ENCODE measurements at regions of chr12 and their contacts with region 1.

Region 1: GRCh38 chr12:57904848-57905811 is 36.2 kb upstream of the ATP23 start:
- DNase-seq: peak; percentile 81 to 90 (median 84)
- ATAC-seq: peak; percentile 95
- H3K4me3 ChIP-seq: no peak overlapping the region
- H3K27ac ChIP-seq: no peak overlapping the region
- H3K4me1 ChIP-seq: peaks cover 0 to 8% of the 10 kb centered on the region in 2 experiments; a peak in 3 of 5 replicates
- H3K27me3 ChIP-seq: no peaks in the 10 kb centered on the region
- CTCF ChIP-seq: peak; percentile 100
- EP300 ChIP-seq: 0 out of 2 replicates have a peak, but pooled peaks have one; percentile 31
- POLR2A ChIP-seq: no peak
- RAD21 ChIP-seq: peak; percentile 100

Region 2: GRCh38 chr12:57695770-57696432 is 209.2 kb before region 1 on chr12:
- CTCF ChIA-PET with region 1: no interaction called
- POLR2A ChIA-PET with region 1: no interaction called
- in situ Hi-C with region 1: no loop called
- intact Hi-C with region 1: no loop called
- DNase-seq: no peak
- ATAC-seq: no peak
- H3K4me3 ChIP-seq: no peak overlapping the region
- H3K27ac ChIP-seq: no peak overlapping the region
- H3K4me1 ChIP-seq: peaks cover 4 to 10% of the 10 kb centered on the region in 2 experiments; a peak in 3 of 5 replicates
- H3K27me3 ChIP-seq: no peaks in the 10 kb centered on the region
- CTCF ChIP-seq: no peak
- EP300 ChIP-seq: no peak
- POLR2A ChIP-seq: no peak
- RAD21 ChIP-seq: no peak

Region 3: GRCh38 chr12:57735952-57736740 is 169.0 kb before region 1 on chr12:
- CTCF ChIA-PET with region 1: no interaction called
- POLR2A ChIA-PET with region 1: no interaction called
- in situ Hi-C with region 1: no loop called
- intact Hi-C with region 1: no loop called
- DNase-seq: peak; percentile 77 to 85 (median 82)
- ATAC-seq: peak; percentile 93
- H3K4me3 ChIP-seq: peak overlapping the region; percentile 38
- H3K27ac ChIP-seq: peak overlapping the region; percentile 11; the same call in 2 of the 3 replicates
- H3K4me1 ChIP-seq: peaks cover 9 to 31% of the 10 kb centered on the region in 2 experiments; a peak in 4 of 5 replicates
- H3K27me3 ChIP-seq: peaks cover 20 to 59% of the 10 kb centered on the region in 2 experiments
- CTCF ChIP-seq: peak; percentile 71 to 79 (median 79)
- EP300 ChIP-seq: no peak
- POLR2A ChIP-seq: no peak
- RAD21 ChIP-seq: peak; percentile 66 to 78

Region 4: DNA sequence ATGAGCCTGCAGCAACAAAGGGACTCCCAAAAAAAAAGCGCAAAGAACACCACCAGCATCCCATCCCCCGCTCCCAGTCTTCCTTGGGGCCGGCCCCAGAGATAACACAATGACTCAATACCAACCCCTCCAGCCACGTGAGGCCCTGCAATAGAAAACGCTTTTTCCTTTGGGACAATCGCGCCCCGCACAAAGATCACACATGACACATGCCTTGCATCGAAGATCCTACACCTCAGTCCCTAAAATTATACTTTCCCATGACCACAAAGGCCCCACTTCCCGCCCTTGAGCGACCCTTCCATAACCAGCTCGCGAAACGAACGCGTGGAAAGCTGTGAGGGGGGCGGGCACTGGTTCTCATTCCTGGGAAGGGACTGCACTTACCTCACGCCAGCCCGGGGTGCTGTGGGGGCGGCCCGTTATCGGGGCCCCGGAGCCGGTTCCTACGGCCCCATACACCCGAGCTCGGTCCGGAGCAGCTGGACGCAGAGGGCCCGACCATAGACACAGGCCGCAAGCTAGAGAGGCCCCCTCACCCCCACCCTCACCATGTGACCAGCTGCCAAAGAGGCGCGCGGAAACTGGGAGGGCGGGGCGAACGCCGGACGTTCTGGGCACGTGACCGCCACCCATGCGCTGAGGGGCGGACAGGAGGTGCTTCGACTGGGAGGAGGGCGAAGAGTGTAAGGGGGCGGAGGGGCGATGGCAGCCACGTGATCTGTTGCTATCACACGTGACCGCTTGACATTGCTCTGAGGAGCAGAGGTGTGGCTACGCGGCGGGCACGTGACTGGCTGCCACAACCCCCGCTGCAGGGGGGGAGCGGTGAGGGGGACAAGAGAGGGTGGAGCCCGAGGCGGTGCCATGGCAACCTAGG is 153.1 kb before region 1 on chr12 and contains the start of gene CDK4:
- CTCF ChIA-PET with region 1: interaction called, 10 read pairs
- POLR2A ChIA-PET with region 1: no interaction called
- in situ Hi-C with region 1: no loop called
- intact Hi-C with region 1: loop called (anchors 1 kb)
- DNase-seq: peak; percentile 92 to 99 (median 96)
- ATAC-seq: peak; percentile 86
- H3K4me3 ChIP-seq: peak within 1 kb of the TSS; percentile 66
- H3K27ac ChIP-seq: peak within 1 kb of the TSS; percentile 96
- H3K4me1 ChIP-seq: peaks cover 34 to 40% of the 10 kb centered on the region in 2 experiments
- H3K27me3 ChIP-seq: no peaks in the 10 kb centered on the region
- CTCF ChIP-seq: no peak; a peak in 1 of 6 replicates
- EP300 ChIP-seq: peak; percentile 75
- POLR2A ChIP-seq: peak; percentile 90
- RAD21 ChIP-seq: 0 out of 4 replicates have a peak, but pooled peaks of 1 of the 2 experiments have one; percentile 1
- polyA plus RNA-seq, gene CDK4: 37.8 to 62.8 TPM

Region 5: DNA sequence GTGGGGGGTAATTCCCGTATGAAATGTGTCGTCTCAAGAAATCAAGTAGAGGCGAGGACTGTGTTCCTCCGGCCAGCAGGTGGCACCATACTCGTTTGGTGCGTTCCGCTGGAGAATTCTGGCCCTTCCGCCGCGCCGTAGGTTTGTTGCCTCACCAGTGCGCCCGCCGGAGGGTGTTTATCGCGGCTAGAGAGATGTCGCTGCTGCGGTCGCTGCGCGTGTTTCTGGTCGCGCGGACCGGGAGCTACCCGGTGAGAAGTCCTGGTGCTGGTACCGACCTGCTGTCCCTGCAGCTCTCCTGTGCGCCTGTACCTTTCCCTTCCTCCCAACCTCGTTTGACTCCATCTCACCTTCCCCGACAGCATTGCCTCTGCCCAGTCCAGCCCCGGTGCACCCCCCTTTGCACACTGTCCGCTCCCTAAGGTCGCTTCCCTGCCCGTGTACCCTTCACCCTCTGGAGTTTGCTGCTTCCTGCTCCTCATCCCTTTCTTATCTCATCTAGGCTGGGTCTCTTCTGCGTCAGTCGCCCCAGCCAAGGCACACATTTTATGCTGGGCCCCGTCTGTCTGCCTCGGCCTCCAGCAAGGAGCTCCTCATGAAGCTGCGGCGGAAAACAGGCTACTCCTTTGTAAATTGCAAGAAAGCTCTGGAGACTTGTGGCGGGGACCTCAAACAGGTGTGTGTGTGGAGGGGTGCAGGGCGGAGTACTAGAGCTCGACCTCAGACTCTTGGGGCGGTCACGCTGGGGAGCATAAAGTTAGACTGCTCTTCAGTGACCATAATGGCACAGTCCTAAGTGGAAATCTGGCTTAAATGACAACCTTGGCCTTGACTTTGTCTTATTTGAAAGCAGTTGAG is 122.3 kb before region 1 on chr12 and contains the start of gene TSFM:
- CTCF ChIA-PET with region 1: interaction called, 14 read pairs
- POLR2A ChIA-PET with region 1: no interaction called
- in situ Hi-C with region 1: no loop called
- intact Hi-C with region 1: no loop called
- DNase-seq: peak; percentile 76 to 98 (median 82)
- ATAC-seq: peak; percentile 92
- H3K4me3 ChIP-seq: peak within 1 kb of the TSS; percentile 69
- H3K27ac ChIP-seq: peak within 1 kb of the TSS; percentile 75
- H3K4me1 ChIP-seq: peaks cover 8 to 12% of the 10 kb centered on the region in 2 experiments; a peak in 4 of 5 replicates
- H3K27me3 ChIP-seq: no peaks in the 10 kb centered on the region
- CTCF ChIP-seq: peak; percentile 91 to 97 (median 96)
- EP300 ChIP-seq: peak; percentile 60; the same call in 1 of the 2 replicates
- POLR2A ChIP-seq: peak; percentile 97
- RAD21 ChIP-seq: peak; percentile 53 to 57
- polyA plus RNA-seq, gene TSFM: 166 to 198 TPM

Region 6: DNA sequence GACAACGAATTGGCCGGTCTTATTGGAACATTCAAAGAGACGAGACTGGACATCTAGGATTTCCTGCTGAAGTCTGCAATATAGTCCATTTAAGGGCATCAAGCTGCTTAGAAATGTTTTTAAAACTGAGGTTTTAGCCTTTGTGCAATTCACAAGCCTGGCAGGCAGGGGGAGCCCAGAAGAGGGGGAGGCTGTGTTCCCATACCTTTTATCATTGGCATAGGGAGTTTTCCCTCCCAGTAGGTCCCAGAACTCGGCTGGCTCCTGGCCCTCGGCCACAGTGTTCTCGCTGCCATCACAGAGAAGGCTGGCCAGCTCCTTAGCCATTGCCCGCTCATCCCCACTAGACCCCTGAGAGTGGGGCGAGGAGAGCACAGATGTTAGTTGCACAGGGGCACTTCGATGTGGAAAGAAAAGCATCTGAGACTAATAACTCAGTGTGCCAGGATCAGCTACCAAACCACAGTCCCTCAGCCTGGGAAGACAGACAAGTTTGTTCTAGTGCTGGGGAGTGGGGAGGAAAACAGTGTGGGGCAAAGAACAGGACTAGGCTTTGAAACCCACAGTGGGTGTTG is 101.7 kb before region 1 on chr12:
- CTCF ChIA-PET with region 1: interaction called, 23 read pairs
- POLR2A ChIA-PET with region 1: no interaction called
- in situ Hi-C with region 1: no loop called
- intact Hi-C with region 1: loop called (anchors 1 kb)
- DNase-seq: peak; percentile 43 to 63 (median 52)
- ATAC-seq: peak; percentile 82
- H3K4me3 ChIP-seq: no peak overlapping the region
- H3K27ac ChIP-seq: no peak overlapping the region
- H3K4me1 ChIP-seq: no peaks in the 10 kb centered on the region
- H3K27me3 ChIP-seq: no peaks in the 10 kb centered on the region
- CTCF ChIP-seq: peak; percentile 70 to 89 (median 76)
- EP300 ChIP-seq: no peak
- POLR2A ChIP-seq: no peak
- RAD21 ChIP-seq: peak; percentile 46 to 73

Region 7: DNA sequence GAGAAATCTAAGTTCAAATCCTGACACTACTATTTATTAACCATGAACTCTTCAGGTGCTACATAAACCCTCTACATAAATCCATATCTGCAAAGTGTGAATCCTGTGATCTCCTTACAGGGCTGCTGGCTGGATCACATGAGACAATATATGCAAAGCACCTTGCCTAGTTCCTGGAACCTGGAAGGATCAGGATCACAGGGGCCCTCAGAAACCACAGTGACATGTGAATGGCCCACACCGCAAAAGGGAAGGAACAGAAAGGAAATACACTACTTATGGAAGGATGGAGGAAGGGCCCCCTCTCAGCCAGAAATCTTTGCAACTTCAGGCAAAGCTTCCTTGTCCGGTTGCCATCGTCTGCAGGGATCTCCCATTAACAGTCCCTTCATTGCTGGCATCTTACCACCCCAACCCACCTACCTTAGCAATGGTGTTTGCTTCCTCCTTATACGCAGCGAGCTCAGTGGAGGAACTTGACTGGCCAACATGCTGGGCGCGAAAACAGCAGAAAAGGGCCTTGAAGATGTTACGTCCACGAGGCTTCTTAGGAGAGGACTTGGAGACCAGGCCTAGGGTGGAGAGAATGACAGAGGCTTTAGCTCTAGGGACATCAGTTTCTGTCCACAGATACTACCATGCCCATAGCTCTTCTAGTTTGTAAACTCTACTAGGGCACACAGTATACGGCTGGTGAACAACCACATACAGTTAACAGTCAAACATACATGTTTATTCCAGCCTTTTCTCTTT is 75.9 kb before region 1 on chr12:
- CTCF ChIA-PET with region 1: interaction called, 227 read pairs
- POLR2A ChIA-PET with region 1: interaction called, 5 read pairs
- in situ Hi-C with region 1: loop called (anchors 5 kb)
- intact Hi-C with region 1: loop called (anchors 1 kb)
- DNase-seq: no peak
- ATAC-seq: no peak
- H3K4me3 ChIP-seq: no peak overlapping the region
- H3K27ac ChIP-seq: no peak overlapping the region
- H3K4me1 ChIP-seq: peaks cover 6 to 9% of the 10 kb centered on the region in 2 experiments; a peak in 4 of 5 replicates
- H3K27me3 ChIP-seq: no peaks in the 10 kb centered on the region
- CTCF ChIP-seq: no peak
- EP300 ChIP-seq: no peak
- POLR2A ChIP-seq: no peak
- RAD21 ChIP-seq: no peak

Region 8: DNA sequence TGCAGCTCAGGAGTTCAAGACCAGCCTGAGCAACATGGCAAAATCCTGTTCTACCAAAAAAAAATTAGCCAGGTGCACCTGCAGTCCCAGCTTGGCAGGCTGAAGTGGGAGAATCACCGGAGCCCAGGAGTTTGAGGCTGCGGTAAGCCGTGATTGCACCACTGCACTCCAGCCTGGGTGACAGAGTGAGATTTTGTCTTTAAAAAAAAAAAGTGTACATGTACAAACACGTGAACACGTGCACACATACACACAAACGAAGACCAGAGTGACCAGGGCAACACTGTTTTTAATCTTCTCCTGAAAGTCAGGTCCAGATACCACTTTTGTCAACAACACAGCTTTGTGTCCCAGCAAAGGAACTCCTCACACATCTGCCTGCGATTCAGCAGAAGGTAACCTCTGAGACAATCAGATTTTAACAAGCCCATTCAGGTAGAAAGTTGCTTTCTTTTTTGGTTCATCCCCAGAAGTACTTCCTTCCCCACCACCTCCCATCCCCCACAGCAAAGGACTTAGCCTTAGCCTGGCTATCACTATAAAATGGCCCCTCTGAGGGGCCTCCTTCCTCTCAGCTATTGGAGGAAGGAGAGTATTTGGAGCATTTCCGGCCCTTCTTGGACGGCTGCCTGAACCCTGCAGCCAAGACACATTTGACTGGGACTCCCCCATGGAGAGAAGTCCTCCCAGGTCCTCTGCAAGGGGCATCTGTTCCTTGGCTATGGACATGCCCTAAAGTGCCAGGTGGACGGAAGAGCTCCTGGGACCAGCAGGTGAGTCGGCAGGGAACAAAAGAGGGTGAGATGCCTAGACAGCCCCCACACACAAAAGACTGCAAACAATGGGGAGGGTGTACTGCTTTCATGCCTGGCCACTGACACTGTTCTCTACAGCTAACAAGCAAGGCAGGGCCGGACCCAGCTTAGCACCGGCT is 68.4 kb before region 1 on chr12:
- CTCF ChIA-PET with region 1: interaction called, 227 read pairs
- POLR2A ChIA-PET with region 1: interaction called, 5 read pairs
- in situ Hi-C with region 1: no loop called
- intact Hi-C with region 1: loop called (anchors 1 kb)
- DNase-seq: peak in 2 of 4 experiments; percentile 78 to 82
- ATAC-seq: peak; percentile 82
- H3K4me3 ChIP-seq: no peak overlapping the region; the same call in 1 of the 2 replicates
- H3K27ac ChIP-seq: peak overlapping the region; percentile 53; the same call in 2 of the 3 replicates
- H3K4me1 ChIP-seq: peaks cover 51 to 53% of the 10 kb centered on the region in 2 experiments
- H3K27me3 ChIP-seq: no peaks in the 10 kb centered on the region
- CTCF ChIP-seq: no peak
- EP300 ChIP-seq: peak; percentile 35; the same call in 1 of the 2 replicates
- POLR2A ChIP-seq: no peak
- RAD21 ChIP-seq: no peak; a peak in 1 of 4 replicates